AG04449 (cell line): ENCODE measurements at regions of chr4 and their contacts with region 1.

Region 1: DNA sequence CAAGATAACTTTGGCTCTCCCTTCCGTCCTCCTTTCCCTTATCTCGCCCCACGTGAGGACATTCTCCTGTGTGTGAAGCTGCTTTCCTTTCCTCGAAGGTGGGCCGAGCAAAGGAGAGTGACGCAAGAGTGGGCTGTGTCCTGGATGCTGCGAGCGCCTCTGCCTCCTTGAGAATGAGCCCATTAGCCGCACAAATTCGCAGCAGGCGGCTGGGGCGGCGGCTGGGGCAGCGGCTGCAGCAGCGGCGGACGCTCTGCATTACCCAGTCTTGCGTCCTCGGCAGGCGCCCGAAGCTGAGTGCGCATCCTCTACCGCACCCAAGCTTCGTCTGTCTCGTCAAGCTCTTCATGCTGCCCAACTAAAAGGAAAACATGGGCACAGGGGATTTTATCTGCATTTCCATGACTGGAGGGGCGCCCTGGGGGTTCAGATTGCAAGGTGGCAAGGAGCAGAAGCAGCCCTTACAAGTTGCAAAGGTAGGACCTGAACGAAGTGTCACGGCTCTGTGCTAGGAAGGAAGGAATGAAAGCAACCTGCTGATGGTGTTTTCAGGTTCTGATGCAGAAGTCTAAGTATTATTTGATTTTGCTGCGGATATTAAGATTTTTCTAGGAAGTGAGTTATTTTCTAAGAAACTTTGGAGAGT is at the start of gene SYNPO2:
- DNase-seq: no peak
- H3K4me3 ChIP-seq: peak within 1 kb of the TSS; percentile 74
- CTCF ChIP-seq: no peak

Region 2: GRCh38 chr4:118767109-118767508 is 121.7 kb before region 1 on chr4:
- CTCF ChIA-PET with region 1: interaction called, 49 read pairs
- POLR2A ChIA-PET with region 1: interaction called, 3 read pairs
- DNase-seq: no peak
- H3K4me3 ChIP-seq: no peak overlapping the region
- CTCF ChIP-seq: no peak

Region 3: DNA sequence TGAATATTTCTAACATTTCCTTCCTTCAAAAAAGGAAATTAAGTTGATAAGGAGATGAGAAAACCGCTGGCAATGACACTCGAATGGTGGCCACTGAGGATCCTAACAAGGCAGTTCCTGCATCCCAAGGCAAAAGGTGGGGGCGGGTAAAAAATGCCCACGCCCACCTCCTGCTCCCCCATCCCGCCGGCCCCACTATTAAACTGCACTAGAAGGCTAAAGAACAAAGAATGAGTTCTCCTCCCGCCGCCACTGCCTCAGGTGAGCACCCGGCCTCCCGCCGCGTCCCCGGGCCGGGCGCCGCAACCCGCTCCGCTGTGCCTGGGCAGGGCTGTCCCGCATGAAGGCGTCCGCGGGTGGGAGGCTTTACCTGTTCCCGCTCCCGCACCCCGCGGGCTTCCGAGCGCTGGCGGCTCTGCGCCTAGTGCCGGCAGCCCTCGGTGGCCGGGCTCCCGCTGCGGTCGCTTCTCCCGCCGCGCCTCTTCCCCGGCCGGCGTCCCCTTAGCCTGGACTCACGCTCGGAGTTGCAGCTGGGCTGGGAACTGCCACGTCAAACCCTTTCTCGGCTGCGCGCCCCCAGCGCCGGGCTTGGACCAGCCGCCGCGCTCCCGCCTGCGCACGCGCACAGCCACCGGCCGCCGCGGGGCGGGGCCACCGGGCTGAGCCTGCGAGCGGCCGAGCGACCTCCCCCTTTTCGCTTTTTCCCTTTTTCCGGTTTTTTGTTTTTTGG is 53.1 kb before region 1 on chr4 and contains the start of gene SEC24D:
- CTCF ChIA-PET with region 1: interaction called, 8 read pairs
- POLR2A ChIA-PET with region 1: interaction called, 15 read pairs
- DNase-seq: no peak
- H3K4me3 ChIP-seq: peak within 1 kb of the TSS; percentile 84
- CTCF ChIP-seq: no peak

Region 4: DNA sequence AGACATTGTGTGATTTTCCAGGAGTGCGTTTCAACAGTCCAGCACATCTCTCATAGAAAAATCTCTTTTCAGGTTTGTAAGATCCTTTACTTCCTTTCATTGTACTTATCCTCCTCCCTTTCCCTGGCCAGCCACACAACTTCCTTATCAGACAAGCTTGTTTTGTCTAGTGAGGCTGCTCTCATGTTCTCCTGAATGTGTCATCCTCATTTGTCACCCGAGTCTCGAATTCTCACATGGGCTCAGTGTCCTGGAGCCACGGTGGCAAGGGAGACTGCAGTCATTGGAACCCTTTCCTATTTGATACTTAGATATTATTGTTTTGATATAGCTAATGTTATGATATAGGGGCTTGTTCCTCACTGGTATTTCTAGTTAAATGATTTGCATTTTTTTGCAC is 16.8 kb after region 1 on chr4:
- CTCF ChIA-PET with region 1: interaction called, 40 read pairs
- POLR2A ChIA-PET with region 1: no interaction called
- DNase-seq: no peak
- H3K4me3 ChIP-seq: no peak overlapping the region
- CTCF ChIP-seq: no peak

Region 5: GRCh38 chr4:118968005-118968404 is 79.2 kb after region 1 on chr4:
- CTCF ChIA-PET with region 1: interaction called, 10 read pairs
- POLR2A ChIA-PET with region 1: no interaction called
- DNase-seq: peak; percentile 78
- H3K4me3 ChIP-seq: no peak overlapping the region; the same call in 1 of the 2 replicates
- CTCF ChIP-seq: no peak

Region 6: DNA sequence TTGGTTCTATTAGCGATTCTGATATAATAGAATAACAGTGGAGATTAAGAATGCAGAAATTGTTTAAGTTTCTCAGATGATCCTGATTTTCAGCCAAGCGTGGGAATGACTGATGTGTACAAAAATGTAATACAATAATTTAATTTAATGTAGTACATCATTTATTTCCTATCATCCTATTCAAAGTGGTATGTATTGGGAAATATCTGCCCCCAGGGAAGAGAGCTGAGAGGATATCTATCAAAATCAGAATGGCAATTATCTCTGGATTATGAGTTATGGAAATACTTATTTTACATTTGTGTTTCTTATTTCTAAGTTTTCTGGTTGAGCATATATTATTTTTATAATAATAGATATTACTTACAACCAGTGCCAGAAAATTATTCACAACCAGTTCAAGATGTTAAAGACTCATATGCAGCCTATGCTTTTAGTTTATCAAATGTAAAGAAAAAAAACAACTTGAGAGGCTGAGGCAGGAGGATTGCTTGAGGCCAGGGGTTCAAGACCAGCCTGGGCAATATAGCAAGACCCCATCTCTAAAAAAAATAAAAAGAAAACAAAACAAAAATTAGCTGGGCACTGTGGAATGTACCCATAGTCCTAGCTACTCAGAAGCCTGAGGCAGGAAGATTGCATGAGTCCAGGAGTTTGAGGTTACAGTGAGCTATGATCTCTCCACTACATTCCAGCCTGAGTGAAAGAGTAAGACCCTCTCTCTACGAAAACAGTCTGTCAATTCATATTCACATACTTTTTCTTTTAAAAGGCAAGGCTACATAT is 429.4 kb after region 1 on chr4:
- CTCF ChIA-PET with region 1: no interaction called
- POLR2A ChIA-PET with region 1: no interaction called
- DNase-seq: no peak
- H3K4me3 ChIP-seq: no peak overlapping the region
- CTCF ChIP-seq: no peak